ENCODE measurements at regions of chr12 and their contacts with region 1.

Region 1: GRCh38 chr12:632102-632696 is 31.0 kb downstream of the NINJ2 start:
- DNase-seq: peak; percentile 77 to 95
- H3K4me3 ChIP-seq: peak overlapping the region; percentile 10; the same call in 1 of the 2 replicates
- H3K27ac ChIP-seq: peak overlapping the region; percentile 68
- H3K4me1 ChIP-seq: peaks cover 57% of the 10 kb centered on the region
- H3K27me3 ChIP-seq: no peaks in the 10 kb centered on the region
- CTCF ChIP-seq: no peak

Region 2: DNA sequence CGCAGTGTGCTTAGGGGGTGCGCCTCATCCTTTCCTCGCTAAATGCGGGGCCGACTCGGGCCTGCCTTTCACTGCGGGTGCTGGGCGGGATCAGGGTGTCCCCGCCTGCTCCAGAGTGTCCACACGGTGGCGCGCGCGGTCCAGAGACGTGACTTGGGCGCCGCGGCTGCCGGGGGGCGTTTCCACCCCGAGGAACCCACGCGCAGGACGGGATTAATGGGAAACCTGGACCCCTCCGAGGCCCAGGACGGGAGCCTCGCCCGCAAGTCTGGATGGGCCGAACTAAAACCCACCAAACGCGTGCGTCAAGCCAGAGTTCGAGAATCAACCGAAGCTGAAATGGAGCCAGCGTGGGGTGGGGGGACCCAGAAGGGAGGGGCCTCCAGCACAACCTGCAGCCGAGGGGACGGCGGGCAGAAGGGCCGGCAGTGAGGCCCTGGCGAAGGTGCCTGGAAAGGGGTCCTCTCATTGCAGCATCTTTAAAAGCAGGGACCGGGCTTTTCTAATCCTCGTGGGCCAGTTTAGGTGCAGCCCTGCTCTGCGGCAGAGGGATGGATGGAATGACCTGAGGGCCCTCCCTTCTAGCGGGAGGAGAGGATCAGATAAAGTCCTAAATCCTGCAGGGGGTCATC is 62.3 kb before region 1 on chr12:
- CTCF ChIA-PET with region 1: interaction called, 4 read pairs
- POLR2A ChIA-PET with region 1: no interaction called
- intact Hi-C with region 1: loop called (anchors 2 kb)
- DNase-seq: peak; percentile 61 to 90
- H3K4me3 ChIP-seq: peak overlapping the region; percentile 77
- H3K27ac ChIP-seq: peak overlapping the region; percentile 84; the same call in 1 of the 2 replicates
- H3K4me1 ChIP-seq: peaks cover 25% of the 10 kb centered on the region
- H3K27me3 ChIP-seq: no peaks in the 10 kb centered on the region
- CTCF ChIP-seq: peak; percentile 94

Region 3: GRCh38 chr12:642633-643474 is 10.7 kb after region 1 on chr12:
- CTCF ChIA-PET with region 1: interaction called, 4 read pairs
- POLR2A ChIA-PET with region 1: interaction called, 7 read pairs
- intact Hi-C with region 1: loop called (anchors 1 kb)
- DNase-seq: peak; percentile 63 to 76
- H3K4me3 ChIP-seq: peak overlapping the region; percentile 77
- H3K27ac ChIP-seq: peak overlapping the region; percentile 79
- H3K4me1 ChIP-seq: peaks cover 36% of the 10 kb centered on the region
- H3K27me3 ChIP-seq: no peaks in the 10 kb centered on the region
- CTCF ChIP-seq: peak; percentile 55

Region 4: DNA sequence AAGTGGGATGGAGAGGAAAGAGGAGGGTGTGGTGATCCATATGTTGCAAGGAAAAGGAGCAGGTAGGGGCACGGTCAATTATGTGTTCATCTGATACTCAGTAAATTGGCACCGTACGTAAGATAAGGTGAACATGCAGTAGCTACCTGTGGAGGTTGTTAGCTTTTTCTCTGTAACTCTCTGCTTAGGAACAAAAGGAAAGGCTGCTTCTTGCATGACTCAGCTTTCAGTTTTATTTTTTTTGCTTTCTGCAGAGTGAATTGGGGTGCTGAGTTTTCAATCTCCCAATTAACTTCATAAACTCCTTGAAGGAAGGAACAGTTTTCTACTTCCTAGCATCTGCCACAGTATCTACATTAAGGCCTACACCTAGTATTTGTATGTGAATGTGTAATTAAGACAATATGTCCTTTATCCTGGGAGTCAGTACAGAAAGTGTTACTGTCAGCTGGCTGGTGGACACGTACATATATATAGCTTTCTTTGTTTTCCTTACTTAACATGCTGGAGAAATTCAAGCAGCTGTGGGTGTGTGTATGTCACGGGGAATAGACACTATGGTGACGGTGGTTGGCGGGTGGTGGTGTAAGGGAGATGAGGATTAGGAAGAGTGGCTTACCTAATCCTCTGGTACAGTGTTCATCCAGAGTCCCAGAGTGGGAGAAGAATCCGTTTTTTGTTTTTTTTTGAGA is 80.1 kb after region 1 on chr12:
- CTCF ChIA-PET with region 1: interaction called, 9 read pairs
- POLR2A ChIA-PET with region 1: no interaction called
- intact Hi-C with region 1: loop called (anchors 2 kb)
- DNase-seq: peak; percentile 25 to 69
- H3K4me3 ChIP-seq: no peak overlapping the region
- H3K27ac ChIP-seq: peak overlapping the region; percentile 31
- H3K4me1 ChIP-seq: peaks cover 11% of the 10 kb centered on the region
- H3K27me3 ChIP-seq: no peaks in the 10 kb centered on the region
- CTCF ChIP-seq: no peak